Activated naive CD4-positive, alpha-beta T cell treated with anti-CD3 and anti-CD28 coated beads for 36 hours (primary cell): ENCODE measurements at regions of chr18 and their contacts with region 1.

Region 1: DNA sequence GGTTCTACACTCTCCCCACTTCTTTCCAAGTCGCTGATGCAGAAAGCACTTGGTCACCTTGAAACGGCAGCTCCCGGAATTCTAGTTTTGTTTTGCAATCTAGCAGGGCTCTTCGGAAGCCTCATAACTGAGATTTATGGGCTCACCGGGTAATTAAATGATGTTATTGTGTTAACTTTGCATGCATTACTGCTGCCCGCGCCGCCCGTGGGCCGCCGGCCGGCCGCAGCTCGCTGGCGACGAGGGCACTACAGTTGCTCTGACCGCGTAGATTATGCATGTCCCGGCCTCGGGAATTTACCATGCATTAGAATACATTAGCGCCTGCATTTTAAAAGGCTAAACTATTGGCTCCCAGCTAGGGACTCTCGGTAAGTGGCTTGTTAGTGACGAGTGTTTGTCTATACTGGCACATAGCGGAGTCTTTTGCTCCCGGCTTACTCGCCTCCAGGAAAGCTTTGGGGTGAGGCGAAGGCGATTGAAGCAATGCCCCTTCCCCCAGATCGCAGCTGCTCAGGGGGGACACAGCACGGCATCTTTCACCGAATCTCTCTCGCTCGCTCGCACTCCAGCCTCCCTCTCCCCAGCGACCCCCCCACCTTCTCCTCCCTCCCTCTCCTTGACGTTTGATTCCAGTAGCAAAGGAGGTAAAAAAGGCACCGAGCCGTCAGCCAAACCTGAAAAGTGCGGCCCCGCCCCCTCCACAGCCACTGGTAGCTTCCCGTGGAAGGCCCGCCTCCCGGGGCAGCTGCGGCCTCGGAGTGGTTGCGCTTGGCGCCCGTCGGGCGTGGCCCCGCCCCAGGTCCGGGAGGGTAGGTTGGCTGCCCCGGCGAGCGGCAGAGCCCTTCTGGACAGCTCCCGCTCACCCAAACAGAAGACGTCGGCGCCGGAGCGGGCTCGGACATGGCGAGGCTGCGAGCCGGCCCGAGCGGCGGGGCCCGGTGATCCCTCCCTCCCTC is at the start of gene ONECUT2:
- DNase-seq: peak; percentile 77
- H3K4me3 Mint-ChIP-seq: peak within 1 kb of the TSS; percentile 51
- H3K27ac Mint-ChIP-seq: no peak within 1 kb of the TSS
- H3K4me1 Mint-ChIP-seq: peaks cover 53% of the 10 kb centered on the region
- H3K27me3 Mint-ChIP-seq: peaks cover 88% of the 10 kb centered on the region
- total RNA-seq, gene ONECUT2: not detected

Region 2: DNA sequence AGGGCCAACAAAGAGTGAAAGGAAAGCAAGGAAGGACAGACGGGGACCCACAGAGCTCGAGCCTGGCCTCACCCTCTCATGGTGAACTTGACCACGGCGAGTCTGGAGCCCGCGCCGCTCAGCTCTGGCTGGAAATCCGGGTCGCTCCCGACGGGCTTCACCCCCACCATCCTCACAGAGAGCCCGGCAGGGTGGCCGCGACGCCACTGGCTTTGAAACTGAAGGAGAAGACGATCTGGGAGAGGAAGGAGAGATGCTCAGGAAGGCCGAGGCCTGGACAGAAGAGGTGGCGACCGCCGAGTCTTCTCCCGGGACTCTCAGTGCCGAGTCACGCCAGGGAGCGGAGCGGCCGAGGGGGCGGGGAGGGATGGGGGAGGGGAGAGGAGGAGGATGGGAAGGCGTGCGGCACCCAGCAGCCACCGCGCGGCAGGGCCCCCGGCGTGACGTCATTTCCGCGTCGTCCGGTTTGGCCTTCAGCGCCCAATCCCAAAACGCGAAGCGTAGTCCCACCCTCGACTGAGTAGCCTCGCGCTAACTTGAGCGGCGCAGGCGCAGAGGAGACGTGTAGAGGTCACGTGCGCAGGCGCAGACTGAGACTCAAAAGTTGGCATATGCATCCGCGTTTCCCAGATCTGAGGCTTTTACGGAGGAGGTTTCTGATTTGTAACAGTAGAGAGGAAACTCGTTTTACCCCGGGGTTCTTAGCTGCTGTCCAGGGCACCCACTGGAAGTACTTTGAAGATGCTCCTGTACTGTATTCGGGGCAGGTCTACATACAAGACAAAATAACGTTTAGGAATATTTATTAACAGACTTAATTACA is 796.3 kb before region 1 on chr18 and contains the start of gene TXNL1:
- CTCF ChIA-PET with region 1: no interaction called
- intact Hi-C with region 1: loop called (anchors 2 kb)
- DNase-seq: peak; percentile 99
- H3K4me3 Mint-ChIP-seq: peak within 1 kb of the TSS; percentile 90
- H3K27ac Mint-ChIP-seq: peak within 1 kb of the TSS; percentile 95
- H3K4me1 Mint-ChIP-seq: peaks cover 38% of the 10 kb centered on the region
- H3K27me3 Mint-ChIP-seq: no peaks in the 10 kb centered on the region
- total RNA-seq, gene TXNL1: 64.1 to 68.6 TPM

Region 3: DNA sequence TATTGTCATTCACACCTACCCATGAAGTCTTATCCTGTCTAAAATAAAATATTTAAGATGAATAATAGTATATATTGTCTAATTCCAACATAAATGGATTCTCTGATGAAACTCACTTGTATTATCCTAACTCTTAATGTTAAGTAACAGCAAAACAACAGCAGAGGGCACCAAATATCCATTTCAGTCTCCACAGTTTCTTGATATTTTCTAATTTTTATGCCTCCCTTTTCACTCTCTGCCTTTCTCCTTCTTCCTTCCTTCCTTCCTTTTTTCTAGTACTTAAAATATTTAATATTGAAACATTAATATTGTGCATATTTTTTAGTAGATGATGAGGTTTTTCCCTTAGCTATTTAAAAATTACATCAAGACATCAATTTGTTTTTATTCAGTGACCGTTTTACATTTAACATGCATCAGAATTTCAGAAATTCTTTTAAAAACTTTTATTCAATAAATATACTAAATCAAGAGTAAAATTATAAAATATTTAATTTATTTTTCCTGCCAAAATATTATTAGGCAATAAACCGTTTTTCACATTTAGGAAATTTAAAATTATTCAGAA is 686.0 kb before region 1 on chr18:
- CTCF ChIA-PET with region 1: no interaction called
- intact Hi-C with region 1: loop called (anchors 2 kb)
- DNase-seq: peak; percentile 10
- H3K4me3 Mint-ChIP-seq: no peak overlapping the region
- H3K27ac Mint-ChIP-seq: no peak overlapping the region
- H3K4me1 Mint-ChIP-seq: peaks cover 16% of the 10 kb centered on the region
- H3K27me3 Mint-ChIP-seq: no peaks in the 10 kb centered on the region

Region 4: DNA sequence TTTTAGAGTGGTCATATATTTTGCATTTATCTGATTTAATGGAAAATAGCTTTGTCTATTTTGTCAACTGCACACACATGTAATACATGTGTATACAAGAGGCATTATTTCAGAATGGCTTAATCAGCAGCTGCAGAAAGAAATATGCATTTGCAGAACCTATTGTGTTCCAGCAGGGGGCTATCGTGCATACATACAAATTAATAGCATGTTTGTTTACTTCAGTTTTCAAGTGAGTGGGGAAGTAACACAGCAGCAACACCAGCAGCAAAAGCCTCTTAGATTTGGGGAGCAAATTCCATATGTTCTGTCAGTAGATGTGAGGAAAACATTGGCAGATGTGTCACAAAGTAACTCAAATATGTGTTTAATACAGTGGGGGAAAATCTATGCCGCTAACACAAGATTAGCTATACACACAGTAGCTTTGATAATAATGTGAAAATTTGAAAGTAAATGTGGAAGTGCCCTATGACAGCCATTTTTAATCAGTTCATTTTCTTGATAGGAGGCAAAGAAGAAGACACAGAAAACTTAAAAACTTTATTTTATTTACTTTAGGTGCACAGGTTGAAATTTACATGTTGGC is 565.5 kb before region 1 on chr18:
- CTCF ChIA-PET with region 1: interaction called, 5 read pairs
- intact Hi-C with region 1: loop called (anchors 2 kb)
- DNase-seq: peak; percentile 17
- H3K4me3 Mint-ChIP-seq: no peak overlapping the region
- H3K27ac Mint-ChIP-seq: no peak overlapping the region
- H3K4me1 Mint-ChIP-seq: peaks cover 15% of the 10 kb centered on the region
- H3K27me3 Mint-ChIP-seq: no peaks in the 10 kb centered on the region

Region 5: DNA sequence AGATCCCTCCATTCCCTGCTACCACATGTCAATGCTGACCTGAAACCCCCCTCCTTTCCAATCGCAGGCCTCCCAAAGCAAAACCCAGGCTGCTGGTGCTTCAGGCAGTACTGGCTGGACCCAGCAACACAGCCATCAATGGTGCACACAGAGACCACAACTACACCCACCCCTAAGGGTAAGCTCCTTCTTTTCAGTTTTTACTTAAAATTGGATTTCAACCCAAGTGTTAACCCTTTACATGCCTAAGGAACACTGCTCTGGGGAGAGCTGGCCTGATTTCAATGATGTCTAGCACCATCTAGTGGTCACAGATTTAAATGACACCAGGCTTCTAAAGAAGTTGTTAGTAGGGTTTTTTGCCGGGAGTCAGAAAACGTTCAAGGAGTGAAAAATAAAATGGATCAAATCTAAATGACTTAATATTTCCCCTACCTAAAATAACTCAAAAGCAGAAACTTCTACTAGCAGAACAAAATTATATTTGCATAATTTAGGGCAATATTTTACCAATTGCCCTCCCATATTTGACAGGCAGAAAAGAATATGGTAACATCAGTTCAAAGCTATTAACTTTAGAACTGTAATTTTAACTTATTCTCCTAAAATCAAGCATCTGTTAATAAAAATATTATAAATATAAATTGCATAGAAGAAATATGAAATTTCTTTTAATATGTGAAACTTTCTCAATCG is 127.1 kb after region 1 on chr18:
- CTCF ChIA-PET with region 1: no interaction called
- intact Hi-C with region 1: loop called (anchors 5 kb)
- DNase-seq: peak; percentile 16
- H3K4me3 Mint-ChIP-seq: no peak overlapping the region
- H3K27ac Mint-ChIP-seq: no peak overlapping the region
- H3K4me1 Mint-ChIP-seq: no peaks in the 10 kb centered on the region
- H3K27me3 Mint-ChIP-seq: no peaks in the 10 kb centered on the region